ENCODE measurements at regions of chr13 and their contacts with region 1.

Region 1: DNA sequence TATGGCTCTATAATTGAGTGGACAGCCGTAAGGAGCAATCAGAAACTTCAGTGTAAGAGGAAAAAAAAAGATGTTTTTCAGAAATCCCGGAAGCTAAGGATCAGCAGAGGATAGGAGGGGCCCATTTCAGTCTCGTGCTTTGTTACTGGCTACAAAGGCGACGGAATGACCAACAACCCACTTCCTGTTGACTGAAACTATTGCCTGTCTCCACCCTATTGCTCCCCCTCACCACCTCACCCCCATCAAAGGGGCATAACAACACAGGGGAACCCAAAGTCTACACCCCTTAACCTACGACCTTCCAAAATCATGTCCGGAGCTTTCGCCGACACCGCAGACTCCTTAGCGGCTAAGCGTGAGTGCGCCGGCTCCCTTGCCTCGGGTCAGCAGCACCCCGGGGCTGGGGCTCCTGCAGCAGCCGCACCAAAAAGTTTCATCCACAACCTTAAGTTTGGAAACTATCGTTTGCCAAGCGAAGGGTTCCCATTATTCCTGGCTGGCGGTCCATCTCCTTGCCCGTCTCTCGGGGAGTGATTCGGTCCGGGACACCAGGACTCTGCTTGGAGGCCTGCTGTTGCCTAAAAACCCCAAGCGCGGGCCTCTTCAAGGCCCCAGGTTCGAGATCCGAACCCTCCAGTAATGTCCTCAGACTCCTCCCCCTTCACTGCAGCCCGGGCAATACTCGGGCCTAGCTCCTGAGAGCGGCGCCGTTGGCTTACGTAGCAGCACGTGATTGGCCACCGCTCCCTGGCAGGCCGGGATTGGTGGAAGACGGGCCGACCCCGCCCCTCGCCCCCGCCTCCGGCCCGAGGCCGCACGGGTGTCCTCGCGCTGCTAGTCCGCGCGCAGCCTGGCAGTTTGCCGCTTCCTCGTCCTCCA is at the start of gene TPP2:
- DNase-seq: peak; percentile 97 to 100 (median 99)

Region 2: GRCh38 chr13:102657630-102658029 is 61.2 kb after region 1 on chr13:
- intact Hi-C with region 1: loop called (anchors 10 kb)
- DNase-seq: no peak

Region 3: DNA sequence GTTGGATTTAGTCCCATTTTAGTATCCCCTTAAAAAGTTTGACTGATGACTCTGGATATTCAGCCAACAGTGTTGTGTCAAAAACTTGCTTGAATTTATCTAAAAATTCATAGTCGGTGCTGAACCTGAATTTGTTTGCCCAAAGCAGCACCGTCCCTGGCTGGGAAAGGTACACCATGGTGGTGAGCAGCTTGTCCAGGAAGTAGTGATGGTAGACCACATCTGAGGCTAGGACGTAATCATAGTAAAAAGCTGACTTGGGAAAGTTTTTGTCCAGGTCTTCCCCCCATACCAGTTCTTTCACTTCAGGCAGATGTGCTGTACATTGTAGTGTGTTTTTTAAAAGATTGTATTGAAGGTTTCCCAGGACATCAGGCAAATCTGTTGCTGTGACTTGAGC is 89.6 kb after region 1 on chr13:
- intact Hi-C with region 1: no loop called
- DNase-seq: no peak

Region 4: DNA sequence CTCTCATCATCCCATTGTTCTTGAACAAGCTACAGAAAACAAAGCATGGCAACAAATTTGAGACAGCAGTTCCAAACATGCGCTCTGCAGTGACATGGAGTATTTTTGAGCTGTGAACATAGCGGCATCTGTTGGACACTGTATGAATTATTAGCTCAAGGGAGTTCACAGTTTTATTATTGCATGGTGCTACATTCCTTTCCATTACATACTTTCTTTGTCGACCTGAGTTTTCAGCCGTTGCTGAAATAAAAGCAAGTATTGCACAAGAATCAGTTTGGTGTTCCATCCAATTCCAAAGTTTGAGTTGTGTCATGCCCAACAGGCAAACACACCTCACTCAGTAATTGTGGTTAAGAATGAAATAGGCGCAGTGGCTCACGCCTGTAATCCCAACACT is 128.5 kb after region 1 on chr13:
- intact Hi-C with region 1: loop called (anchors 2 kb)
- DNase-seq: peak in 25 of 42 donors; percentile 5 to 77 (median 26)

Region 5: GRCh38 chr13:102798581-102799425 is 202.4 kb after region 1 on chr13 and contains the starts of genes BIVM and POGLUT2:
- intact Hi-C with region 1: loop called (anchors 5 kb)
- DNase-seq: peak; percentile 85 to 97 (median 92)

Region 6: GRCh38 chr13:102845630-102846260 is 249.4 kb after region 1 on chr13 and contains the start of gene ERCC5:
- intact Hi-C with region 1: loop called (anchors 5 kb)
- DNase-seq: peak; percentile 82 to 97 (median 93)

Region 7: GRCh38 chr13:103168901-103169508 is 572.6 kb after region 1 on chr13:
- intact Hi-C with region 1: no loop called
- DNase-seq: no peak

Region 8: GRCh38 chr13:103188713-103189326 is 592.4 kb after region 1 on chr13:
- intact Hi-C with region 1: no loop called
- DNase-seq: no peak

Measured in head of caudate nucleus (tissue), 42 donors.